ENCODE measurements at regions of chr20 and their contacts with region 1.

Region 1: DNA sequence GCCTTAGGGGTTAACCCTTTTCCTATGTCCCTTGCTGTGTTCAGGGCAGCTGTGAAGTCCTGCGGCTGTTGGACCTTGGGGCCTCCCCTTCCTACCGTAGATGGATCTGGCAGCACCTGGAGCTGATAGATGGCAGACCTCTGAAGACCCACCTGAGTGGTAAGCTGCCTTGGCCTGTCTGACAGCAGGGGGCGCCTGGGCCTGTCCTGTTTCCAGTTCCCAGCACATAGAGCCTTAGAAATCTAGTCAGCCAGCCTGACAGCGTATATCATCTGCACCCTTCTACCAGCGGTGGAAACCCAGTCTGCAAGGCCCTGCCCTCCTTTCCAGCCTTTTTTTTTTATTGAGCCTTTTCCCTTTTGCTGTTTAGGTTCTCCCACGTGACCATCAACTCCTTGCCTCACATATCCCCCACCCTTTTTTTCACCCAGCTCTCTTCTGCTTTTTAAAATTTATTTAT is 26.6 kb downstream of the CNBD2 start:
- DNase-seq: peak; percentile 78 to 96
- H3K4me3 ChIP-seq: no peak overlapping the region
- CTCF ChIP-seq: peak in 1 of 3 donors; percentile 78
- POLR2A ChIP-seq: no peak

Region 2: DNA sequence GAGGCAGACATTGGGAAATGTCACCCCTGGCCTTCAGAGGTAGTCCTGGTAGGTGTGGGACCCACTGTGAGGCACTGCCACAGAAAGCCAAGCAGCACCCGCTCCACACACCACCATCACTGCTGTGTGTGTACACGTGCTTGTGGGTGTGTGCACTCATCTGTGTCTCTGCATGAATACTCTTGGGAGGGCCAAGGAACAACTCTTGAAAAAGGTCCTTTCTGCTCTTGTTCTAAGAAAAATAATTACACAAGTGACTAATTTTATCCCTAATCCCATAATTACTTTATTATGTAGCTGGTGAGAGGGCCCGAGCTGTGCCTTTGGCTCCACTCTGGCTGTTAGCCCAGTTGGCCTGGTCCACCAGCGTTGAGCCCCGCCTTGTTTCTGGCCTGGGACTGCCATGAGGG is 137.8 kb after region 1 on chr20:
- intact Hi-C with region 1: loop called (anchors 1 kb)
- DNase-seq: no peak
- H3K4me3 ChIP-seq: no peak overlapping the region
- CTCF ChIP-seq: no peak
- POLR2A ChIP-seq: no peak

Region 3: GRCh38 chr20:36193977-36194712 is 199.1 kb after region 1 on chr20:
- intact Hi-C with region 1: loop called (anchors 5 kb)
- DNase-seq: no peak
- H3K4me3 ChIP-seq: no peak overlapping the region
- CTCF ChIP-seq: no peak
- POLR2A ChIP-seq: no peak

Region 4: DNA sequence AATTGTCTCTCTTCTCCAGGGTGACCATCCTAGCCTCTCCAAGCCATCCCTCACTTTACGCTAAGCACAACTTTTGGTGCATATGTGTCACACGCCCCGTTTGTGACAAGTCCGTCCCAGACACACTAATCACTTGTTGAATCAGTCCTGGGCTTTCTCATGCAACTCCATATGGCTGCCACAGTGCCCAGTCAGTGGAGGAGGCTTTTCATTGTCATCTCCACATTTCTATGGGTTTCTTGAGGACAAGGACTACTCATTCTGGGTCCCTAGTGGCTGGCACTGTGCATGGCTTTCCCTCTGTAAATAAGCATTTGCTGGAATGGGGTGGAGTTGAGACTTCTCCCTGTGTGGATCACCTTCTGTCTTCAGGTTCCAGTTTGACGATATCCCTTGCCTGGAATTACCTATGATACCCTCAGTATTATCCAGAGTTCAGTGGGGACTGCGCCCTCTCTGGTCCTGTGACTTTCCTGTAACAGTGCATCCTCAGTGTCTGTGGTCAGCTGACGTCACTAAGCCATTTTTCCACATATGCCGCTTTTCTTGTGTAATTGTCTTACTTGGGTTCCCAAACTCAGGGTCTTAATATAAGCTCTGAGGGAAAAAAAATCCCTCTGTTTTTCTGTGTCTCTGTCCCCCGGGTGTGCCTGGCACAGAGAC is 486.5 kb after region 1 on chr20:
- intact Hi-C with region 1: no loop called
- DNase-seq: no peak
- H3K4me3 ChIP-seq: no peak overlapping the region
- CTCF ChIP-seq: no peak
- POLR2A ChIP-seq: no peak